ENCODE measurements at regions of chr19 and their contacts with region 1.

Region 1: GRCh38 chr19:31448221-31448657 is 99.0 kb upstream of the TSHZ3 start:
- DNase-seq: no peak
- H3K4me3 ChIP-seq: no peak overlapping the region
- CTCF ChIP-seq: no peak

Region 2: GRCh38 chr19:31413353-31413752 is 34.9 kb before region 1 on chr19:
- in situ Hi-C with region 1: loop called (anchors 5 kb)
- DNase-seq: no peak
- H3K4me3 ChIP-seq: no peak overlapping the region
- CTCF ChIP-seq: no peak

Measured in astrocyte of the cerebellum (primary cell).